ENCODE measurements at regions of chr12 and their contacts with region 1.

Region 1: DNA sequence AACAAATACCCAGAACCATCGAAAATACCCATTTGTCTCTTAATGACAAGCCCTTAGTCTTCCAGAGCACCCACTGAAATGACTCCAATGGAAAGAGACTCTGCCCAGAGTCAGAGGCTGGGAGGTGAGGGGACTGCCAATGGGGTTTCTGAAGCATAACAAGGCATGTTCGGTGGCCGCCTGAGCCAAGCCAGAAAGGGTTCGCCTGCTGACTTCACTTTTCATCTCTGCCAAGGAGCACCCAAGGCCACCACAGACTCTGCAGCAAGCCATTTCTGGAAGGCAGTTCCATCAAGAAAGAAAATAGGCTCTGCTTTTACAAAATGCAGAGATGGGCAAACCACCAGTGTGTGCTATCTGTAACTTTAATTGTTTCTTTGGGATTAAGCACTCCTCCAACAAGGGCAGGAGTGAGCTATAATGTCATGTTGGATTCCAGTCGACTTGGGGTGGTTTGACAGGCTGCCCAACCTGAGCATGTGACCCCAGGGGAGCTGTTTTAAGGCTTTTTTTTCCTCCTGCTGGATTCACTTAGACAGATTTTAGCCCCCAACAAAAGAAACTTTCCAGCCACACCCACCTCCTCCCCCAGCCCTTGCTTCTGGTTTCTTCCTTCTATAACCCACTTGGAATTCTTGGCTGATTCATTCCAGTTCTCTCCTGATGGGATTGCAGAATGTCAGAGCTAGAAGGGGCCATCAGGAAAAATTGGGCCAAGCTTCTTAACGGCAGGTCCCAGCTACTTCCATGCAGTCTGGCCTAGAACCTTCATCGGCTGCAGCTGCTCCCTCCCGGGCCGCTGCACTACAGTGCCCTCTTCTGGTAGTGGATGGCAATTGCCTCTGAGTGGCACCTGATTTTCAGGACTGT is 24.1 kb downstream of the CKAP4 start:
- DNase-seq: peak; percentile 68 to 79
- H3K4me3 ChIP-seq: no peak overlapping the region
- H3K4me3 Mint-ChIP-seq: no peak overlapping the region
- H3K27ac Mint-ChIP-seq: no peak overlapping the region
- H3K4me1 ChIP-seq: peaks cover 9% of the 10 kb centered on the region; the same call in 1 of the 2 replicates
- H3K4me1 Mint-ChIP-seq: peaks cover 8% of the 10 kb centered on the region
- H3K27me3 ChIP-seq: no peaks in the 10 kb centered on the region; the same call in 1 of the 2 replicates
- H3K27me3 Mint-ChIP-seq: peaks cover 3% of the 10 kb centered on the region
- CTCF ChIP-seq: peak; percentile 90 to 91

Region 2: DNA sequence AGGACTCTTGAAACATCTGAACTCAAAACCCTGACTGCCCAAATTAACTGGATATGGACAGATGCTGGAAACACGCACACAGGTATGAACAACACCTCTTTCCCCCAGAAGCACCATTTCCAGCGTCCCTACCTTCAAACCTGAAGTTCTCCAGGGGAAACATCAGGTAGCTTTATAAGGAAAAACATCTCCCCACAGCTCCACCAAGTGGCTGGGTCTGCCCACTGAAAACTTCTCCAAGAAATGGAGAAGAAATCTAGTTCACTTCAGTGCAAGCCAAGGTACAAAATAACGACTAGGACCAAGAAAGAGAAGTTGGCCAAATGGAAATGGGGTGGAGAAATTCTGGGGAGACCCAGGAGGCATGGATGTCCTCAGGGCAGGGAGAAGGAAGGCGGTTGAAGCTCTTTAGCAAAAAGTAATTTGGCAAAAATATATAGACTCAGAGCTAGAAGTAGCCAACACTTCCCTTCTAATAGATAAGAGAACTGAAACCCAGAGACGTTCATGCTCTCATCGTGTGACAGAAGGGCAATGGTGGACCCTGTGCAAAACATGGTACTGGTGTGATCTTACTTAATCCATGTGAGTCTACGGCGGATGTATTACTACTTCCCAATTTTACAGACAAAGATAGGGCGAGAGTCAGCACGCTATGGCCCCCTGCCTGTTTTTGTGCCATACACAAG is 74.5 kb before region 1 on chr12:
- CTCF ChIA-PET with region 1: interaction called, 12 read pairs
- POLR2A ChIA-PET with region 1: no interaction called
- intact Hi-C with region 1: no loop called
- DNase-seq: peak; percentile 57
- H3K4me3 ChIP-seq: no peak overlapping the region
- H3K4me3 Mint-ChIP-seq: no peak overlapping the region
- H3K27ac Mint-ChIP-seq: no peak overlapping the region
- H3K4me1 ChIP-seq: no peaks in the 10 kb centered on the region
- H3K4me1 Mint-ChIP-seq: peaks cover 9% of the 10 kb centered on the region
- H3K27me3 ChIP-seq: no peaks in the 10 kb centered on the region
- H3K27me3 Mint-ChIP-seq: no peaks in the 10 kb centered on the region
- CTCF ChIP-seq: peak; percentile 45 to 79

Region 3: GRCh38 chr12:106282457-106283097 is 58.9 kb after region 1 on chr12:
- CTCF ChIA-PET with region 1: interaction called, 44 read pairs
- POLR2A ChIA-PET with region 1: interaction called, 3 read pairs
- intact Hi-C with region 1: loop called (anchors 1 kb)
- DNase-seq: peak; percentile 70 to 73
- H3K4me3 ChIP-seq: no peak overlapping the region
- H3K4me3 Mint-ChIP-seq: no peak overlapping the region
- H3K27ac Mint-ChIP-seq: peak overlapping the region; percentile 35
- H3K4me1 ChIP-seq: peaks cover 34% of the 10 kb centered on the region
- H3K4me1 Mint-ChIP-seq: peaks cover 39% of the 10 kb centered on the region
- H3K27me3 ChIP-seq: no peaks in the 10 kb centered on the region
- H3K27me3 Mint-ChIP-seq: no peaks in the 10 kb centered on the region
- CTCF ChIP-seq: peak; percentile 68 to 88

Region 4: GRCh38 chr12:106357549-106358395 is 134.1 kb after region 1 on chr12 and contains the start of gene POLR3B:
- CTCF ChIA-PET with region 1: interaction called, 11 read pairs
- POLR2A ChIA-PET with region 1: interaction called, 4 read pairs
- intact Hi-C with region 1: no loop called
- DNase-seq: peak; percentile 94
- H3K4me3 ChIP-seq: peak within 1 kb of the TSS; percentile 64
- H3K4me3 Mint-ChIP-seq: no peak within 1 kb of the TSS
- H3K27ac Mint-ChIP-seq: peak within 1 kb of the TSS; percentile 94
- H3K4me1 ChIP-seq: peaks cover 29% of the 10 kb centered on the region
- H3K4me1 Mint-ChIP-seq: peaks cover 13% of the 10 kb centered on the region
- H3K27me3 ChIP-seq: no peaks in the 10 kb centered on the region
- H3K27me3 Mint-ChIP-seq: no peaks in the 10 kb centered on the region
- CTCF ChIP-seq: peak; percentile 82 to 91
- total RNA-seq, gene POLR3B: 13.7 and 13.9 TPM in 2 replicates